ENCODE measurements at regions of chr6 and their contacts with region 1.

Region 1: GRCh38 chr6:108174371-108175175 is 8.8 kb downstream of the NR2E1 start:
- DNase-seq: peak in 1 of 6 donors; percentile 58
- ATAC-seq: no peak
- H3K4me3 ChIP-seq: peak overlapping the region in 1 of 4 donors; percentile 54
- H3K27ac ChIP-seq: no peak overlapping the region
- H3K4me1 ChIP-seq: peaks cover 0 to 5% (median 0%) of the 10 kb centered on the region in 3 donors
- H3K27me3 ChIP-seq: peaks cover 0 to 9% (median 3%) of the 10 kb centered on the region in 4 donors
- CTCF ChIP-seq: no peak

Region 2: DNA sequence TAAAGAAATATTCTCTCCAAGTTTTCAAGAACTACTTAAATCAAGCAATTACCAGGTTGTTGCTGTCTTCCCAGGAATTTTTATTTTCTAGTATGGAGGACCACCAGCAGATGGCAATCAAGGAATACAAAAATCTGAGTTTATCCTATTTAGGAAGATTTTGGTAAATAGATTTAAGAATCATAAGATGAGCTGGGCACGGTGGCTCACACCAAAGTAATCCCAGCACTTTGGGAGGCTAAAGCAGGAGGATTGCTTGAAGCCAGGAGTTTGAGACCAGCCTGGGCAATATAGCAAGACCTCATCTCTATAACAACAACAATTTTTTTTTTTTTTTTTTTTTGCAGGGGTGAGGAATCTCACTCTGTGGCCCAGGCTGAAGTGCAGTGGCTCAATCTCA is 197.3 kb before region 1 on chr6:
- intact Hi-C with region 1: no loop called
- DNase-seq: no peak
- ATAC-seq: peak in 3 of 4 donors; percentile 47 to 48 (median 47)
- H3K4me3 ChIP-seq: no peak overlapping the region
- H3K27ac ChIP-seq: no peak overlapping the region
- H3K4me1 ChIP-seq: peaks cover 0 to 4% (median 0%) of the 10 kb centered on the region in 3 donors
- H3K27me3 ChIP-seq: no peaks in the 10 kb centered on the region
- CTCF ChIP-seq: peak in 2 of 4 donors; percentile 17 to 24

Region 3: GRCh38 chr6:108105571-108105970 is 69.0 kb before region 1 on chr6:
- intact Hi-C with region 1: no loop called
- DNase-seq: no peak
- ATAC-seq: no peak
- H3K4me3 ChIP-seq: no peak overlapping the region
- H3K27ac ChIP-seq: no peak overlapping the region
- H3K4me1 ChIP-seq: no peaks in the 10 kb centered on the region
- H3K27me3 ChIP-seq: no peaks in the 10 kb centered on the region
- CTCF ChIP-seq: no peak

Region 4: DNA sequence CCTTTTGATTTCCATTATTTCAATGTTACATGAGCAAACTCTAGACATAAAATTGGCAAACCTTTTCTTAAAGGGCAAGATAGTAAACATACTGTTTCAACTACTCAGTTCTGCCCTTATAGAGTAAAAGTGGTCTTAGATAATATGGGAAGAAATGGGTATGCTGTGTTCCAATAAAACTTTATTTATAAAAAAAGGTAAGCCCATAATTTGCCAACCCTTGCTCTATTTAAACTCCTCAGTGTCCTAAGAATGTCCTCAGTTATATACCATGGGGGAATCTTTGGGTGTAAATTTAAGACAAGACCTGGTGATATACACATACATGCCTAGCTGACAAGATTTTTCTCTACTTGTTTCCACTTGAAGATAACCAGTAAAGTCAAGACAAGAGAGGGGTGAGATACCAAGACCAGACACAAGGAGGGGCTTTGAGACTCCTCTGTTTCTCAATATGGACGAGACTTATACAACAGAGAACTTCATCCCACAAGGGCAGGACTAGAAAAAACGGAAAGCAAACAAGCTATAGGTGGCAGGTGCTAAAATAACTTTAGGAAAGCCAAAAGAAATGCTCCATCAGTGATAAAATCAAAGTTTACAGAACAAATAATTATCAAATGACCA is 75.8 kb after region 1 on chr6:
- intact Hi-C with region 1: loop called in 1 of 3 experiments (anchors 5 kb)
- DNase-seq: no peak
- ATAC-seq: no peak
- H3K4me3 ChIP-seq: no peak overlapping the region
- H3K27ac ChIP-seq: peak overlapping the region in 1 of 4 donors; percentile 62
- H3K4me1 ChIP-seq: peaks cover 0 to 28% (median 10%) of the 10 kb centered on the region in 3 donors
- H3K27me3 ChIP-seq: no peaks in the 10 kb centered on the region
- CTCF ChIP-seq: no peak

Region 5: DNA sequence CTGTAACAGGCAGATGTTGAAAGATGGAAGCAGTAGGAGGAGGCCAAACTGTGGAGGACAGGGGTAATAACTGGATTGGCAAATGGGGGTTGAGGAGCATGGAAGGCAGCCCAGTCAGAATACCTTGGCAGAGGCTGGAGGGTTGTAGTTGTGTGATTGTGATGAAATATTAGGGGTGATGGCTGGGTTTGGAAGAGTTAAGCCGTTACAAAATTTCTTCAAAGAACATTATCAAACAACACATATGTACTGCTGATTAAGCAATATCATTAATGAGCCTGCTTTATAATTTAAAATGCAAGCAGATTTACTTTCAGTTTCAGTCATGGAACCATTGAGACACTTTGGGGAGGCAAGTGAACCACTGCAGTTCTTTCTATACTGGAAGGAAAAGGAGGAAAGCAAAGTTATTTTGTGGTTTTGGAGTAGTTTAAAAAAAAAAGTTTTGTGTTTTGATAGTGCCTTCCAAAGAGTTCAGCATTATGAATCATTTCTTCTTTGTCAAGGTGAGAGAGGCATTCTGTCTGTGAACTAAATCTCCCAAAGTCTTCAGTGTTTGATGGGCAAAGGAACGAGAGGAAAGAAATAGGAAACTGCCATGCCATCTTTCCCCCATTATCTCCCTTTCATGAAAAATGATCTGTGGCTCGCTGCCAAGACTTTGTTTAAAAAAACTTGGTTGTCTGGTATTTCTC is 406.8 kb after region 1 on chr6:
- intact Hi-C with region 1: no loop called
- DNase-seq: no peak
- ATAC-seq: peak in 3 of 4 donors; percentile 44 to 55 (median 52)
- H3K4me3 ChIP-seq: no peak overlapping the region
- H3K27ac ChIP-seq: peak overlapping the region in 2 of 4 donors; percentile 28 to 42
- H3K4me1 ChIP-seq: peaks cover 41 to 56% (median 52%) of the 10 kb centered on the region in 3 donors
- H3K27me3 ChIP-seq: no peaks in the 10 kb centered on the region
- CTCF ChIP-seq: no peak